ENCODE measurements at regions of chr10 and their contacts with region 1.

Region 1: DNA sequence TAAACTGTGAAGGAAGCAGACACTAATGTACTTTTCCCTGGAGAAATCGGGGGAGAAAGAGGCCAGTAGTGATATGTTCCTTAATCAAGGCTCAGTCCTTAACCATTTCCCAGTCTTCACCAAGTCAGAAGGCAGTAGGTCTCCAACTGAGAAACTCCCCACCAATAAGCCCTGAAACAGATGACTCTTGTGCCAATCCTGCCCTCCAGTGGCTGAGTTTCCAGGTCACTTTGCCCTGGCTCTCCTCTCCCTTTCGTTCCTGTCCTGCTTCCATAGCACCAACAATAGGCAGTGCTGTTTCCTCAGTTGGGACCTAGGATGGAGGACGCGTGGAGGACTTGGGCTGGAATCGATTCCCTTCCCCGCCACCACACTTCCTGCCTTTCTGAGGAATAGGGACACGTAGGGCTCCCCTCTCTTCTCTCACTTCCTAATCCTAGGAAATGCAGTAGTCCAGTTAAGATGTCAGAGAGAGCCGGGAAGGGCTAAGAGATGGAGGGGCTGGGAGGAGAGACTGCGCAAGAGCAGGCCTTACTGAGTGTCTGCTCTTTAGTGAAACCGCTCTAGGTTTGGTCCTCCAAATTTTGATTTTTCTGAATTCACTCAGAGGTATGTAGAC is 23.4 kb downstream of the ATOH7 start:
- DNase-seq: peak; percentile 83
- H3K4me3 Mint-ChIP-seq: no peak overlapping the region
- H3K27ac Mint-ChIP-seq: no peak overlapping the region
- H3K4me1 Mint-ChIP-seq: no peaks in the 10 kb centered on the region
- H3K27me3 Mint-ChIP-seq: peaks cover 19% of the 10 kb centered on the region
- CTCF ChIP-seq: peak; percentile 73

Region 2: DNA sequence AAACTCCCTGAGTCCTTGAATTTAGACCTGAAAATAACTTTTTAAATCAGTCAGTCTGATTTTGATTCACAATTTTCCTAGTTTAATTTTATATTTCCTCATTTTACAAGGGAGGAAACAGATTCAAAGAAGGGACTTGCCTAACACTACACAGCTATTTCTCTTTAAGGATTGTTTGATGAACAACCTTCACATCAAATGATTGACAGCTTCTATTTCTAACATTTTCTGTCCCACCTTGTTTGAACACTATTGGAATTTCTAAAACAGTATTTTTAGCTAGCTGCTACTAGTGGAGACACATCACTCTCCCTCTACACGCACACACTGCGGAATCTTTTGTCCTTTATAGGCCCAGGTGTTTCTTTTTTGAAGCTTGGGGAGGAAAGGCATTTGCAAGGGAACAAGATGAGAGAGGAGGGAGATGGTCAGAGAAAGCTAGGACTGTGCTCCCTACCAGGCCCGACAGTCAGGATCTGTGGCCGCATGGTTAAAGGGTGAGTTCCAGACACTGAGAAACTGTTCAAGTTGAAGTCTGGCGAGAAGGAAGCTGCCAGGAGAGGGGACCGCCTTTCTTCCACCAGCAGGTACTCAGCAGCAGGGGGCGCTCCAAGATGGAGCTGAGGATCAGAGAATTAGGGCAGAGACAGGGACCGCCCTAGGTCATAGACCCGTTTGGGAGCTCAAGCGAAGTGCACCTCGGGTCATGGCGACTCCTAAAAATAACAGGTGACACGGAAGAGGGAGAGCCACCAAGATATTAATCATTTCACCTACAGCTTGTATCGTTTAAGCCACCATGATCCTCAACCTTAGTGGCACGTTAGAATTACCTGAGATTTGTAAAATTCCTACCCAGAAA is 420.3 kb before region 1 on chr10:
- CTCF ChIA-PET with region 1: no interaction called
- intact Hi-C with region 1: loop called (anchors 1 kb)
- DNase-seq: peak; percentile 88
- H3K4me3 Mint-ChIP-seq: peak overlapping the region; percentile 14
- H3K27ac Mint-ChIP-seq: peak overlapping the region; percentile 6
- H3K4me1 Mint-ChIP-seq: peaks cover 25% of the 10 kb centered on the region
- H3K27me3 Mint-ChIP-seq: no peaks in the 10 kb centered on the region
- CTCF ChIP-seq: peak; percentile 89

Region 3: GRCh38 chr10:68090586-68090985 is 117.9 kb before region 1 on chr10:
- CTCF ChIA-PET with region 1: no interaction called
- intact Hi-C with region 1: no loop called
- DNase-seq: no peak
- H3K4me3 Mint-ChIP-seq: no peak overlapping the region
- H3K27ac Mint-ChIP-seq: no peak overlapping the region
- H3K4me1 Mint-ChIP-seq: peaks cover 50% of the 10 kb centered on the region
- H3K27me3 Mint-ChIP-seq: no peaks in the 10 kb centered on the region
- CTCF ChIP-seq: no peak

Region 4: GRCh38 chr10:68156373-68157185 is 52.0 kb before region 1 on chr10:
- CTCF ChIA-PET with region 1: interaction called, 5 read pairs
- intact Hi-C with region 1: loop called (anchors 2 kb)
- DNase-seq: peak; percentile 75
- H3K4me3 Mint-ChIP-seq: no peak overlapping the region
- H3K27ac Mint-ChIP-seq: no peak overlapping the region
- H3K4me1 Mint-ChIP-seq: peaks cover 23% of the 10 kb centered on the region
- H3K27me3 Mint-ChIP-seq: no peaks in the 10 kb centered on the region
- CTCF ChIP-seq: peak; percentile 77

Region 5: GRCh38 chr10:68318331-68319059 is 110.0 kb after region 1 on chr10:
- CTCF ChIA-PET with region 1: interaction called, 11 read pairs
- intact Hi-C with region 1: no loop called
- DNase-seq: no peak
- H3K4me3 Mint-ChIP-seq: no peak overlapping the region
- H3K27ac Mint-ChIP-seq: no peak overlapping the region
- H3K4me1 Mint-ChIP-seq: peaks cover 12% of the 10 kb centered on the region
- H3K27me3 Mint-ChIP-seq: no peaks in the 10 kb centered on the region
- CTCF ChIP-seq: no peak

Region 6: DNA sequence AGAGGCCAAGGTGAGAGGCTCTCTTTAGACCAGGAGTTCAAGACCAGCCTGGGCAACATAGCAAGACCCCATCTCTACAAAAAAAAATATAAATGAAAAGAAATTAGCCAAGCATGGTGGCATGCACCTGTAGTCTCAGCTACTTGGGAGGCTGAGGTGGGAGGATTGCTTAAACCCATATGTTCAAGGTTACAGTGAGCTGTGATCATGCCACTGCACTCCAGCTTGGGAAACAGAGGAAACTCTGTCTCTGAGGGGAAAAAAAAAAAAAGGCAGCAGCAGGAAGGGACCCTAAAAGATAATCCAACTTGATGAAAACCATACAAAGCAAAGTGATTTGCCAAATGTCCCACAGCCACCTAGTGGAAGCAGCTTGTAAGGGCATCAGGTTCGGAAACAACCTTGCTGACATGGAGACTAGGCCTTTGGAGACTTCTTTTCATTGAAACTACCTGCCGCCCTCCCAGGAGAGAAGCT is 139.8 kb after region 1 on chr10:
- CTCF ChIA-PET with region 1: interaction called, 14 read pairs
- intact Hi-C with region 1: loop called (anchors 1 kb)
- DNase-seq: peak; percentile 56
- H3K4me3 Mint-ChIP-seq: no peak overlapping the region
- H3K27ac Mint-ChIP-seq: no peak overlapping the region
- H3K4me1 Mint-ChIP-seq: no peaks in the 10 kb centered on the region
- H3K27me3 Mint-ChIP-seq: no peaks in the 10 kb centered on the region
- CTCF ChIP-seq: peak; percentile 89